Activated CD4-positive, alpha-beta memory T cell treated with anti-CD3 and anti-CD28 coated beads for 36 hours (primary cell): ENCODE measurements at regions of chr3 and their contacts with region 1.

Region 1: DNA sequence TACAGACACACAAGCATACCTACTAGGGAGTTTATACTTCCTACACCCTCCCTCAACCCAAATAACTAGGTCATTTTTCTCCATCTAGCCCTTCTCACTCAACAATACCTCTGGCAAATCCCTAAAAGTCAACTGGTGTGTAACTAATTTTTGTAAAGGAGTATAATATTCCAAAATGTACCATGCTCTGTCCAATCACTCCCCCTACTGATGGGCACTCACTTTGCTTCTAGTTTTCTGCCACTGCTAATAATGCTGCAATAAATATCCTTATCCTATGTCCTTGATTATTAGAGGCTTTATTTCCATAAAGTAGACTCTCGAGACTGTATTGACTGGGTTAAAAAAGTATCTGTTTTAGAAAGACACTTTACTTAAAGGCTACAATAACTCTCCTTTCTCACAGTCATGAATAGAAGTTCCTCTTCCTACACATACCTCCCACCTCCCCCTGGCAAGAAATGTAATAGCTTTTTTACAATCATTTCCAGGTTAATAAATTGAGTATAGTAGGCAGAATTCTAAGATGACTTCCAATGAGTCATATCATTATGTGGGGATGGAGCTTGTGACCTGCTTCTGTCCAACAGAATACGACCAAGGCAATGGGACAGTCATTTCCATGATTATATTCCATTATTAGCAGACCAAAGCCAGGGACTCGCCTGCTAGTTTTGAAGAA is 30.0 kb downstream of the SHQ1 start:
- DNase-seq: no peak
- H3K4me3 Mint-ChIP-seq: no peak overlapping the region
- H3K27ac Mint-ChIP-seq: no peak overlapping the region
- H3K4me1 Mint-ChIP-seq: peaks cover 22% of the 10 kb centered on the region
- H3K27me3 Mint-ChIP-seq: no peaks in the 10 kb centered on the region

Region 2: GRCh38 chr3:71964170-71964569 is 854.1 kb before region 1 on chr3:
- CTCF ChIA-PET with region 1: no interaction called
- POLR2A ChIA-PET with region 1: no interaction called
- intact Hi-C with region 1: no loop called
- DNase-seq: no peak
- H3K4me3 Mint-ChIP-seq: no peak overlapping the region
- H3K27ac Mint-ChIP-seq: no peak overlapping the region
- H3K4me1 Mint-ChIP-seq: peaks cover 2% of the 10 kb centered on the region
- H3K27me3 Mint-ChIP-seq: peaks cover 20% of the 10 kb centered on the region

Region 3: DNA sequence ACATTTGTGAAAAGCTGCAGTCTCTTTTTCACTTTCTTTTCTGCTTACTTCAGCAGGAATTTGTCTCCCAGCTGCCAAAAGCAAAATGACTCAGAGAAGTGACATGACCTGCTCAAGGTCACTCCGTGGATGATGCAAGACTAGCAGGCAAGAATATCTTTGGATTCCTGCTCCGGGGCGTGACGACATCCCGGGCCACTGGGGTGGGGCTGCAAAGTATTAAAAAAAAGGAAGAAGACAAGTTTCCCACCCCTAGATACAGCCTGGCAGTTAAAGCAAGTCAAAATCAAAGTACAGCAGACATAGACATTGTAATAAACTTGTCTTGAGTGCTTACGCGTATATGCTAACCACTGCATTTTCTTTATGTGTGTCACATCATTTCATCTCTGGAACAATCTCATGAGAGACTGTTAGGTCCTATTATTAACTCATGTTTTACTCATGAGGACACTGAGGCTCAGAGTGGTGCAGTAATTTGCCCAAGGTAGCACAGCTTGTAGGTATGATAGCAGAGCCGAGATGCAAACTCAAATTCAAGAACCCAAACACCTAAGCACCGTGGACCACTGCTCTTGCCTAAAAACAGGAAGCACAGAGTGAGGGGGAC is 548.1 kb before region 1 on chr3:
- CTCF ChIA-PET with region 1: no interaction called
- POLR2A ChIA-PET with region 1: no interaction called
- intact Hi-C with region 1: loop called (anchors 10 kb)
- DNase-seq: peak; percentile 47
- H3K4me3 Mint-ChIP-seq: no peak overlapping the region
- H3K27ac Mint-ChIP-seq: peak overlapping the region; percentile 64
- H3K4me1 Mint-ChIP-seq: peaks cover 55% of the 10 kb centered on the region
- H3K27me3 Mint-ChIP-seq: peaks cover 1% of the 10 kb centered on the region

Region 4: DNA sequence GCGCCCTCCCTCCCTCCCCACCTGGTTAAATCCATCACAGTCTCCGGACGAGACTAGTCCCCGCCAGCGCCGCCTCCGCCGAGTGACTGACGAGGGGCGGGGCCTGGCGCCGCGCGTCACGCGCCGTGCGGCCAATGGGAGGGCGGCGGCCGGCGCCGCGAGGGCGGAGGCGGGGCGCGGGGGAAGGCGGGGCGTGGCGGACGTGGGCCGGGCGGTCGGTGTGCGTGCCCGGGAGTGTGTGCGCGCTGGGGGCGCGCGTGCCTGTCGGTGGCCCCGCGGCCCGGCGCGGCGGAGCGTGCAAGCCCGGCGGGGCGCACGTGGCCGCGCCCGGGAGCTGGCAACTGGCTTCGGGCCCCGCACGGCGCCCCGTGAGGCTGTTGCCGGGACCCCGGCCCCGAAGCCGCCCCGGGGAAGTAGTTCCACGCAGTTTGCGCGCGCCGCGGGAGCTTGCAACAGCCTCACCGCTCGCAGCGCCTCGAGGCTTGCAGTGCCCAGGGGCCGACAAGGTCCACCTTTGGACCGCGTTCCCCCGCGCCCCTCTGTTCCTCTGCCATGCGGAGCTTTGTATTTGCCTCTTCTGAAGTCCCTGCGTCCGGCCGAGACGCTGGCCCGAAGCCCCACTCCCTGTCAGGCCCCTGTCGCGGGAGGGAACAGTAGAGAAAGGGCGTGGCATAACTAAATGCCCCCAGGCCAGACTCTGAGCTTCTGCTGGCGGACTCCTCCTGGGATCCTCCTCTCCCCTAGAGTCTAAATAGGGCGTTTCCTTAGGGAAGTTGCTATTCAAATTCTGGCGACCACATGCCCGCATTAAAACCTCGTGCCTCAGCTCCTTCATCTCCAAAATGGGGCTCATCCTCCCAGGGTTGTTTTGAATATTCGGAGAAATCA is 370.9 kb before region 1 on chr3:
- CTCF ChIA-PET with region 1: no interaction called
- POLR2A ChIA-PET with region 1: no interaction called
- intact Hi-C with region 1: loop called (anchors 5 kb)
- DNase-seq: peak; percentile 93
- H3K4me3 Mint-ChIP-seq: peak overlapping the region; percentile 61
- H3K27ac Mint-ChIP-seq: no peak overlapping the region
- H3K4me1 Mint-ChIP-seq: peaks cover 34% of the 10 kb centered on the region
- H3K27me3 Mint-ChIP-seq: peaks cover 23% of the 10 kb centered on the region

Region 5: GRCh38 chr3:72702997-72703396 is 115.2 kb before region 1 on chr3:
- CTCF ChIA-PET with region 1: no interaction called
- POLR2A ChIA-PET with region 1: no interaction called
- intact Hi-C with region 1: no loop called
- DNase-seq: no peak
- H3K4me3 Mint-ChIP-seq: no peak overlapping the region
- H3K27ac Mint-ChIP-seq: no peak overlapping the region
- H3K4me1 Mint-ChIP-seq: no peaks in the 10 kb centered on the region
- H3K27me3 Mint-ChIP-seq: no peaks in the 10 kb centered on the region

Region 6: GRCh38 chr3:72872183-72872582 is 54.0 kb after region 1 on chr3:
- CTCF ChIA-PET with region 1: no interaction called
- POLR2A ChIA-PET with region 1: no interaction called
- intact Hi-C with region 1: no loop called
- DNase-seq: no peak
- H3K4me3 Mint-ChIP-seq: no peak overlapping the region
- H3K27ac Mint-ChIP-seq: no peak overlapping the region
- H3K4me1 Mint-ChIP-seq: no peaks in the 10 kb centered on the region
- H3K27me3 Mint-ChIP-seq: peaks cover 7% of the 10 kb centered on the region

Region 7: GRCh38 chr3:73056014-73056844 is 238.0 kb after region 1 on chr3:
- CTCF ChIA-PET with region 1: no interaction called
- POLR2A ChIA-PET with region 1: no interaction called
- intact Hi-C with region 1: no loop called
- DNase-seq: no peak
- H3K4me3 Mint-ChIP-seq: no peak overlapping the region
- H3K27ac Mint-ChIP-seq: no peak overlapping the region
- H3K4me1 Mint-ChIP-seq: peaks cover 26% of the 10 kb centered on the region
- H3K27me3 Mint-ChIP-seq: no peaks in the 10 kb centered on the region